Heart right ventricle (tissue), 16 donors: ENCODE measurements at regions of chr3 and their contacts with region 1.

Region 1: DNA sequence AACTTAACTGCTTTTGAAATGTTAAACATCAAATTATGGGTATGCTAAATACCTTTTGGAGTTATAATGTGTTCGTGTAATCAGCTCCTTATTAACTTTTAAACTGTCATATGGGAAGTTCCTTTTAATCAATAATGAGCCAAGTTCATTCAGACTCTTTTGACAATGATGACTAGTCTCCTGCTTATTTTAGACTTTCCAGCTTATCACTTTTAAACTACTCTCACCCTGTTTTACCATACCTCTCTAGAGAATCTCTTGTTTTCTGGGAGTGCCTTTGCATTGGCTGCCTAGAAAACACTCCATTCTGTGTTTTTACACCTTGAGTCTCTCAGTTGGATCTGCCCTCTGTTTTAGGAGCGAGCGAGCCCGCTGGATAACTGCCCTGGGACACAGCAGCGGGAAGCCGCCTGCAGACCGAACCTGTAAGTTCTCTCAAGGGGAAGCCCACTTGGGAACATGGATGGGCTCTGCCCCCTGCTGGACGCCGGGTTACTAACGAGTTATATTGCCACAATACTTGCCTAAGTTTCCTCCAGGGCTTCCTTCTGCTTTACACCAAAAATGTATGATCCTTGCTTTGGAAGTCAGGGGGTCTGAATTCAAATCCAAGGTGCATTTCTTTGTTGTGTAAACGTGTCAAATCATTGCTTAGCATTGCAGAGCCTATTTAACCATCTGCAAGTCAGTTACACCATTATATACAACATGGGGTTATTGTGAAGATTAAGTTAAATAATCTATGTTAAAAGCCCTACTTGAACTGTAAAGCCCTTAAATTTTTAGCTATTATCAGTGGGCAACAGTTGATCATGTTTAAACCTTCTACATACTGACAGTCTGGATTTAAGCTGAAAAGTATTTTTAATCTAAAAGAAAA is 71.3 kb downstream of the DHX36 start:
- DNase-seq: peak; percentile 88 to 89
- ATAC-seq: peak; percentile 77 to 97 (median 94)
- H3K4me3 ChIP-seq: peak overlapping the region in 2 of 10 donors; percentile 4 to 28
- H3K27ac ChIP-seq: no peak overlapping the region
- H3K4me1 ChIP-seq: peaks cover 0 to 13% (median 4%) of the 10 kb centered on the region in 9 donors
- H3K27me3 ChIP-seq: no peaks in the 10 kb centered on the region
- CTCF ChIP-seq: peak; percentile 83 to 98 (median 92)

Region 2: DNA sequence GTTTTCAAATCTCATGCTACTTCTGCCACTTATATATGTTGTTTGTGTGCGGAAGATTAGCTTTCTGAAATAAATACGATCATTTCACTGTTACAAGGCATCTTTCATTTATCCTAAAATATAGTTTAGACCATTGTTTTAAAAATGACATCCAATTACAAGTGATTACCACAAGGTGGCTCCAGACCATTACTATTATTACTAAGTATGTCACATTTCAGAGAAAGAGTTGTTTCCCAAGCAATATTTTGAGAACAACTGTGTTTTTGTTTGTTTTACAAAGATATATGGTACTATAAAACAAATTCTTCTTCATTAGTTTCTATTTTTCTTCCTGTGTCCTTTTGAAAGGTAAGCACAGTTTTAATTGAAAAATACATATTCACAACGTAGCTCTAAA is 1227.0 kb before region 1 on chr3:
- intact Hi-C with region 1: loop called in 3 of 10 experiments (anchors 5 to 10 kb)
- DNase-seq: no peak
- ATAC-seq: no peak
- H3K4me3 ChIP-seq: no peak overlapping the region
- H3K27ac ChIP-seq: no peak overlapping the region
- H3K4me1 ChIP-seq: peaks cover 0 to 19% (median 10%) of the 10 kb centered on the region in 9 donors
- H3K27me3 ChIP-seq: peaks cover 0 to 5% (median 0%) of the 10 kb centered on the region in 7 donors
- CTCF ChIP-seq: peak; percentile 40 to 79 (median 68)

Region 3: GRCh38 chr3:154003649-154004048 is 249.3 kb before region 1 on chr3:
- intact Hi-C with region 1: loop called in 2 of 10 experiments (anchors 10 kb)
- DNase-seq: no peak
- ATAC-seq: no peak
- H3K4me3 ChIP-seq: no peak overlapping the region
- H3K27ac ChIP-seq: no peak overlapping the region
- H3K4me1 ChIP-seq: no peaks in the 10 kb centered on the region
- H3K27me3 ChIP-seq: no peaks in the 10 kb centered on the region
- CTCF ChIP-seq: no peak

Region 4: GRCh38 chr3:154018100-154018696 is 234.8 kb before region 1 on chr3:
- intact Hi-C with region 1: no loop called
- DNase-seq: no peak
- ATAC-seq: no peak
- H3K4me3 ChIP-seq: no peak overlapping the region
- H3K27ac ChIP-seq: no peak overlapping the region
- H3K4me1 ChIP-seq: no peaks in the 10 kb centered on the region
- H3K27me3 ChIP-seq: no peaks in the 10 kb centered on the region
- CTCF ChIP-seq: peak in 6 of 9 donors; percentile 6 to 53 (median 28)

Region 5: GRCh38 chr3:154095832-154096421 is 157.1 kb before region 1 on chr3:
- intact Hi-C with region 1: loop called in 9 of 10 experiments (anchors 1 to 5 kb)
- DNase-seq: no peak
- ATAC-seq: no peak
- H3K4me3 ChIP-seq: no peak overlapping the region
- H3K27ac ChIP-seq: no peak overlapping the region
- H3K4me1 ChIP-seq: no peaks in the 10 kb centered on the region
- H3K27me3 ChIP-seq: no peaks in the 10 kb centered on the region
- CTCF ChIP-seq: peak in 7 of 9 donors; percentile 40 to 68 (median 51)

Region 6: DNA sequence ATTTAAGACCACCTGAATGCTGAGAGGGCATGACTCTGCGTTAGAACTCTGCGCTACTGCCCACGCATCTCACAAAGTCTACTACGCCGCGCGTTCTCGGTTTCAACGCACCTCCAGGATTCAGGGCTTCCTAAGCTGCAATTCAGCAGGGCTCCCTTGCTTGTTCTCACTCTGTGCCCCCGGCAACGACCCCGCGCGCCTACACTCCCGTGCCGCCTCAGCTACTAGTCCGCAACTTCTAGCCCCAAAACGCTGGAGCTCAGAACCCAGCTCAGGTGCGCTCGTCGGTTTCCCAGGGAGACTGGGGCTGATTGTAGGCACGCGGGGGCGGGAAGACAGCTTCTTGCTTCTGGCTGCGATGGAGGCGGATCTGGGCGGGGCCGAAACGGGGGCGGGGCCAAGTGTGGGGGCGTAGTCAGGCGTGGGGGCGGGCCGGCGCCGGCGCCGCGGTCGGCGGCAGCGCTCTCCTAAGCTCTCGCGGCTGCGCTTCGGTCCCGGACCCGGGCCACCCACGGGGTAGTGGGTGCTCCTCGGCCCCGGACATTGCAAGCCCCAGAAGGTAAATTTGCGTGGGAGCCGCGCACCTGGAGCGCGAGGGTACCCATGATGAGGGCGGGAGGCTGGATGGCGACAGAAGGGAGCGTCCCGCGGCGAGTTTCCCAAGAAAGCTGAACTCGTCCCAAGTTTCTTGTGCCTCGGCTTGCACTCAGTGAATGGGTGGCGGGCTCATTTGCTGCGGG is 131.9 kb before region 1 on chr3 and contains the start of gene ARHGEF26:
- intact Hi-C with region 1: loop called in 4 of 10 experiments (anchors 5 to 10 kb)
- DNase-seq: peak; percentile 86 to 87
- ATAC-seq: peak; percentile 92 to 98 (median 95)
- H3K4me3 ChIP-seq: peak within 1 kb of the TSS; percentile 59 to 96 (median 78)
- H3K27ac ChIP-seq: peak within 1 kb of the TSS; percentile 20 to 76 (median 47)
- H3K4me1 ChIP-seq: peaks cover 0 to 28% (median 17%) of the 10 kb centered on the region in 9 donors
- H3K27me3 ChIP-seq: peaks cover 0 to 57% (median 13%) of the 10 kb centered on the region in 7 donors
- CTCF ChIP-seq: no peak
- total RNA-seq, gene ARHGEF26: 0.74 to 2.2 (median 1.1) TPM